ENCODE measurements at regions of chr20 and their contacts with region 1.

Region 1: DNA sequence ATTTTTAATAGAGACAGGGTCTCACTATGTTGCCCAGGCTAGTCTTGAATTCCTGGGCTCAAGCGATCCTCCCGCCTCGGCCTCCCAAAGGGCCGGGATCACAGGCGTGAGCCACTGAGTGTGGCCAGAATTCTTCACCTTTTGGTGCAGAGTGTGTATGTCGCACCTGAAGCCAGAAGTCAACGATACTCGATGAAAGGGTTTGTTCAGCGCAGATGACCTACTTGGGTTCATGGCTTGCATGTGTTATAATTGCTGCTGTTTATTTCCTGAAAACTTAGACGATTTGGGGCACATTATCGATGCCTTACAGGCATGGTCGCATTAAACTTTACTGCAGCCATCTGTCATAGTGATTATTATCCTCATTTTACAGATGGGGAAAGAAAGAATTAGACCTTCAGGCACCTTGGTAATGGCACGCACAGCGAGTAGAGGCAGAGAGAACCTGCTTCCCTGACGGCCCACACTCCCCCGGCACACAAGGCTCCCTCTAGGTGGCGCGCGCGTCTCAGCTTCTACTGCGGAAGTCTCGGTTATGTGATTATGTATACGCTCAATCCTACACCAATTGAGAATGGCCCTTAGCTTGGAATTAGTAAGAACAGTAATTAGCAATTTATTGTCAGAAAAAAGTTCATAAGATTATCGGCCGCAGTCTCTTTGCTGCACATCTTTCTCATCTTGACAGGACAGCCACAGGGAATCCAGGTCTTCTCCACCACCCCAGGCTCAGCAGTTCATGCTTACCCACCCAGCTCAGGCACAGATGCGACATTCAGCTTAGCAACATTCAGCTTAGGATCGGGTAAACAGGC is 212.8 kb upstream of the PROKR2 start:
- DNase-seq: peak; percentile 71
- CTCF ChIP-seq: peak; percentile 92

Region 2: GRCh38 chr20:5191829-5192569 is 337.5 kb before region 1 on chr20:
- in situ Hi-C with region 1: no loop called
- DNase-seq: peak; percentile 79
- CTCF ChIP-seq: peak; percentile 63

Region 3: DNA sequence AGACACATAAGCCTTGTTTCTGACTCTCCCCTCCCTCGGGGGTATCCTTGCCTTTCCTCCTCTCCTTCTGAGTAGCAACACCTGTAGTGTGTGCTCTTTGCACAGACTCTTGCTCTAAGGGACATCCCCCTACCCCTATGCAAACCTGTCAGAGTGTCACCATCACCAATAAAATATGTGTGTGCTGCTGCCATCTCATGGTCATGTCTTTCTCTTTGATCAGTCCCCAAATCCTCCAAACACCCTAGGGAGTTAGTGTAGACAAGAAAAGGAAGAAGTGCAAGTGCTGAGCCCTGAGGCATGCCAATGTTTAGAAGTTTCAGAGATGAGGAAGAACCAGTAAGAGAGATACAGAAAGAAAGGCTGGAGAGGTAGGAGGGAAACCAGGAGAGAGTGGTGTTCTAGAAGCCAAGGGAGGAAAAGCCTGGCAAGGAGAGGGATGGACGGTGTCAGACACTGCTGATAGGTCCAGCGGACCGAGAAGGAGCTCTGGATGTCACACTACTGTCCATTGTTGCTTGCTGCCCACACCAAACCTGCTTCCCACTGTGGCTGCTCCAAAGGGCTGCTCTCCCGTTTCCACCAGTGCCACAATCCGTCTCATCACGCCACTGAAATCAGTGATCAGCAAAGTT is 404.4 kb after region 1 on chr20:
- in situ Hi-C with region 1: loop called (anchors 10 kb)
- DNase-seq: peak; percentile 63
- CTCF ChIP-seq: peak; percentile 41

Region 4: GRCh38 chr20:6074145-6074561 is 544.6 kb after region 1 on chr20:
- in situ Hi-C with region 1: loop called (anchors 10 kb)
- DNase-seq: no peak
- CTCF ChIP-seq: peak; percentile 19